Esophagus muscularis mucosa (tissue), 4 donors: ENCODE measurements at regions of chr4 and their contacts with region 1.

Region 1: GRCh38 chr4:140851032-140851636 is 94.9 kb upstream of the TBC1D9 start:
- DNase-seq: no peak
- H3K4me3 ChIP-seq: no peak overlapping the region
- H3K27ac ChIP-seq: no peak overlapping the region
- H3K4me1 ChIP-seq: peaks cover 1 to 25% (median 11%) of the 10 kb centered on the region in 4 donors
- H3K27me3 ChIP-seq: no peaks in the 10 kb centered on the region
- CTCF ChIP-seq: peak; percentile 69 to 85 (median 78)
- EP300 ChIP-seq: no peak
- POLR2A ChIP-seq: no peak

Region 2: DNA sequence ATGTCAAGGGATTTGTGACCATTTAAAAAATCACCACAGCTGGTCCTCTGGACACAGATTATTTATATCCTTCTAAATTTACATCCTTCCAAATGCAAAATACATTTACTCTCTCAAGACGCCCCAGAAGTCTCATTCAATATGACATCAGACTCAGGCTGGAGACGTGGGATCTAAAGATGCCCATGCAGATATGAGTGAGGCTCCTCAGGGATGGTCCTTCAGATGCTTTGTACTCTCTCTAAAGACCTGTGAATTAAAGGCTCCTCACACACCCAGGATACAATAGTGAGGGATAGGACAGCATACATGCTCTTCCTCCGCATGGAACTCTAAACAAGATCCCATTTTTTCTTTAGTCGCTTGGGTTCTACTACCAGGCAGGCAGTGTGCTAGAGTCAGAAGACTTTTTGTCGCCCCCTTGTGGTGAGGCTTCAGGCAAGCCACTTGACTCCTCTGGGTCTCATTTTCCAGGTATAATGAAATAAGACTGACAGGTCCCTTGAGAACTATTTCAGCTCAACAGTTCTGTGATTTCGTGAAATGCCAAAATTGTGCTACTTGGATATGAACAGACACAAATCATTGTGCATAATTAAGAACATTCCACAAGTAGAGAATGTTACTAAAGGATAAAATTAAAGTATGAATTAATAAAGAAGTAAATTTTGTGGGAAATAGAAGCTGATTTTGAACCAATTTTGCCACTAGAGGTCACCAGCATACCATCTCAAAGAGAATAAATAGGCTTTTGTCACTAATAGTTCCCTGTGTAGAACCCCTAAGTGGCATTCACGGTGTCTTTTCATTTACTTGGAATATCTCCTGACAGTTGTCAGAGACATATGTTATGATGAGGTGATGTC is 491.3 kb before region 1 on chr4:
- intact Hi-C with region 1: loop called (anchors 5 kb)
- DNase-seq: no peak
- H3K4me3 ChIP-seq: no peak overlapping the region
- H3K27ac ChIP-seq: no peak overlapping the region
- H3K4me1 ChIP-seq: no peaks in the 10 kb centered on the region
- H3K27me3 ChIP-seq: no peaks in the 10 kb centered on the region
- CTCF ChIP-seq: peak; percentile 68 to 82 (median 78)
- EP300 ChIP-seq: no peak
- POLR2A ChIP-seq: no peak

Region 3: DNA sequence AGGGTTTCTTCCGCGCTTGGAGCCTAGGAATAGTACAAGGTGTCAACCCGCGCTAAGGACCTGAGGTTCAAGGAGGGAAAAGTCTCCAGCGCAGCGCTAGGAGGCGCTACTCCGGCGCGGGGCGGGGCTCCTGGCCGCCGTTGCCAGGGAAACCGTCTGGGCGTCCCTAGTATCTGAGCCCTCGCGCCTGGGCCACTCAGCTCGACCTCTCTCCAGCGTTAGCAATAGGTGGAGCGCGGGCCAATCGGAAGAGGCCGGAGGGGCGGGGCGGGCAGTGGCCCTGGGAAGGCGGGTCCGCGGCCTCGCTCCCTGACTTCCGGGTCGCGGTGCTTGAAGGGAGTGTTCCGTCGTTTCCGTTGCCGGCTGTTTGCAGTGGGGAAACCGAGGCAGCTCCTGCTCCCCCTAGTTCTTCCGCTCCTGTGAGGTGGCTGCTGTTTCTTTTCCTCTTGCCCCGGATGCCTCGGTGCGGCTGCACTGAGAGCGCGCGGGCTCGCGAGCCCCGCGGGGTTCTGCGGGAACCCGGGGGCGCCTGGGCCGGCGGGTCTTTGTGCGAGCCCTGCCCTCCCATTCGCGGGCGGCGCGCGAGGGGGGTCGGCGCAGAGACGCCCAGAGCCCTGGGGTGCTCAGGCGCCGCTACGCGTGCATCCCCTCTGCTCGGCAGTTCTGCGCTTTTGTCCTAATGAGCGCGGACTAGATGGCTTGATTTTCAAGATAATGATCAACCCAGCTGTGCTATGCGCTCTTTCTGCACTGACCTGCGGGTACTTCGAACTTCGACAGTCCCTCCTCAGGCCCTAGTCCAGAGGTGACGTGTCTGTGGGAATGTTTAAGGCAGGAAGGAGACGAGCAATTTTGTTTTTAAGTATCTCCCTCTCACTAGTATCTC is 327.0 kb before region 1 on chr4 and contains the start of gene ELMOD2:
- intact Hi-C with region 1: loop called (anchors 2 kb)
- DNase-seq: peak; percentile 99
- H3K4me3 ChIP-seq: peak within 1 kb of the TSS; percentile 65 to 99 (median 89)
- H3K27ac ChIP-seq: peak within 1 kb of the TSS; percentile 85 to 90 (median 90)
- H3K4me1 ChIP-seq: peaks cover 13 to 20% (median 15%) of the 10 kb centered on the region in 4 donors
- H3K27me3 ChIP-seq: no peaks in the 10 kb centered on the region
- CTCF ChIP-seq: peak; percentile 88 to 94 (median 93)
- EP300 ChIP-seq: no peak
- POLR2A ChIP-seq: peak; percentile 17
- total RNA-seq, gene ELMOD2: 11.2 to 16.2 (median 15.1) TPM

Region 4: DNA sequence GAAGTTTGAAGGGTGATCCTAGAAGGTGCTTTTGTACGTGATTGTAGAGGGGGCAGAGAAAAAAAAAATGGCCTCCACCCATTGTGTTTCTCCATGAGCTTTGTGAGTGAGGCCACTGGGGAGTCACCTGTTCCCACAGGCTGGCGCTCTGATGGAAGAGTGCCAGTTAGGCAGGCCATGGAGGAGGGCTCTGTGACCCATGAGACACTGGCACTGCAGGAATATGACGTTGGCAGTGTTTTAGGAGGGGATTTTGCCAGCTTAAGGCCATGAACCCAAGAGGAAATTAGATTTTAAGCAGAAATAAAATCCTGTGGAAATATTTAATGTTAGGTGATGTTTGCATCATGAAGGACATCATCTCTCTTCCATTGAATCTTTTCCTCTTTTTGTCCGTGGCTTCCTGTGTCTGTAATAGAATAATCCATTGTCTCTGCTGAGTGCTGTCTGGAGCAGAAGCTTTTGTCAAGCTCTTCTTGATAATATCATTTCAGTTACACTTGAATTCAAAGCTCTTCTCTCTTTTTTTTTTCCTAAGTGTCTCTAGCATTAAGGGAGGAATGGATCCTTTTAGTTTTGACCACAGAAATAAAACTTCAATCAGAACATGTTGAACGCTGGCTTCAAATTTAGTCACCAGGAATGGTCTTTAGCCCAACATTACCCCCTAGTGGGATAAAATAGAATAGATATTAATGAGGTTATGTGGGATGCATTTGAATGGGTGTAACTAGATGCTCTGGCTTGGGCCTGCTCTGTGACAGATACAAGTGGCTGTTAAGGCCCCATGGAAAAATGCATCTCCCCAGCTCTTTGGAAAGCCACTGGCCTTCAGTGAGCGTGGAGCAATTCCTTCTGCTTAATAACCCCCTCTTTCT is 241.3 kb before region 1 on chr4:
- intact Hi-C with region 1: loop called (anchors 10 kb)
- DNase-seq: no peak
- H3K4me3 ChIP-seq: no peak overlapping the region
- H3K27ac ChIP-seq: no peak overlapping the region
- H3K4me1 ChIP-seq: peaks cover 0 to 7% (median 2%) of the 10 kb centered on the region in 4 donors
- H3K27me3 ChIP-seq: no peaks in the 10 kb centered on the region
- CTCF ChIP-seq: peak; percentile 41 to 54 (median 46)
- EP300 ChIP-seq: no peak
- POLR2A ChIP-seq: no peak

Region 5: GRCh38 chr4:140756319-140757231 is 94.6 kb before region 1 on chr4 and contains the start of gene TBC1D9:
- intact Hi-C with region 1: loop called (anchors 5 kb)
- DNase-seq: no peak
- H3K4me3 ChIP-seq: peak within 1 kb of the TSS; percentile 84 to 95 (median 92)
- H3K27ac ChIP-seq: peak within 1 kb of the TSS; percentile 88 to 96 (median 94)
- H3K4me1 ChIP-seq: peaks cover 7 to 29% (median 26%) of the 10 kb centered on the region in 4 donors
- H3K27me3 ChIP-seq: no peaks in the 10 kb centered on the region
- CTCF ChIP-seq: peak in 2 of 3 experiments; percentile 8 to 14
- EP300 ChIP-seq: no peak
- POLR2A ChIP-seq: no peak
- total RNA-seq, gene TBC1D9: 15.4 to 23.8 (median 21.3) TPM